Prostate gland (tissue), 2 donors: ENCODE measurements at regions of chr2 and their contacts with region 1.

Region 1: DNA sequence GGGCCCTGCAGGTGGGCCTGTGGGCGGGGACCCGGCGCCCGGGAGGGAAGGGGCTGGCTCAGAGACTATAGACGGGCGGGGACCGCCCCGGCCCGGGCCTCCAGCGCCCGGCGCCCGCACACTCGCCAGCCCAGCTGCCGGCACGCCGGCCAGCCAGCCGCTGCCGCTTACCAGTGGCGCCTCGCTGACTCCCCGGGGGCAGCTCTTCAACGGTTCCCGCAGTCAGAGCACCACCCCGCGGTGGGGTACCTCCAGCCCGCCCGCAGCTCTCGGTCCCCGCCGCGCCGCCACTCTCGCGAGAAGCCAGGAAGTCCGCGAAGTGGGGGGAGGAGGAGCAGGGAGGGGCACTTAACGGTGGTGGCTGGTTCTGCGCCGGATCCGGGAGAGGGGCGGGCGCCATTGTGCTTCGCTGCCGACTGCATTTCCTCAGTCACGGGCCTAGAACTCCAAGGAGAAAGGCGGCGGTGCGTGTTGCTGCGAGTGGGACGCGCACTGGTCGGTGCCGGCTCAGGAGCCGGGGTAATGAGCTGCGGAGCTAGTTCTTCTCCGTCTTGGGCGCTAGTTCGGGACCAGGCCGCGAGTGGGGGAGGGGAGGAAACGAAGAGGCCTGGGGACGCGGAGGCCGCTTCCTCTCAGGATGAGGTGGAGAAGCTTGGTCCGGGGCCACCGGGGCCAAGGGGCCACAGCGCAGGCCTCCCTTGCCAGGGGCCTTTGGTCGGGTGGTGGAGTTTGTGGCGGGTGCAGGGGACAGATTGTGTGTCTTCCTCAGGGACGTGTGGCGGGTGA is at the start of gene MARCHF7:
- DNase-seq: peak; percentile 94
- H3K4me3 ChIP-seq: peak within 1 kb of the TSS; percentile 74 to 93
- H3K27ac ChIP-seq: peak within 1 kb of the TSS; percentile 94 to 97
- H3K4me1 ChIP-seq: peaks cover 12% of the 10 kb centered on the region
- H3K27me3 ChIP-seq: no peaks in the 10 kb centered on the region
- CTCF ChIP-seq: peak in 3 of 4 experiments; percentile 26 to 69 (median 58)
- POLR2A ChIP-seq: peak; percentile 90
- total RNA-seq, gene MARCHF7: 60.7 to 119 TPM

Region 2: GRCh38 chr2:159131914-159132281 is 580.4 kb before region 1 on chr2:
- intact Hi-C with region 1: loop called (anchors 10 kb)
- DNase-seq: no peak
- H3K4me3 ChIP-seq: no peak overlapping the region
- H3K27ac ChIP-seq: no peak overlapping the region
- H3K4me1 ChIP-seq: no peaks in the 10 kb centered on the region
- H3K27me3 ChIP-seq: no peaks in the 10 kb centered on the region
- CTCF ChIP-seq: no peak
- POLR2A ChIP-seq: no peak

Region 3: DNA sequence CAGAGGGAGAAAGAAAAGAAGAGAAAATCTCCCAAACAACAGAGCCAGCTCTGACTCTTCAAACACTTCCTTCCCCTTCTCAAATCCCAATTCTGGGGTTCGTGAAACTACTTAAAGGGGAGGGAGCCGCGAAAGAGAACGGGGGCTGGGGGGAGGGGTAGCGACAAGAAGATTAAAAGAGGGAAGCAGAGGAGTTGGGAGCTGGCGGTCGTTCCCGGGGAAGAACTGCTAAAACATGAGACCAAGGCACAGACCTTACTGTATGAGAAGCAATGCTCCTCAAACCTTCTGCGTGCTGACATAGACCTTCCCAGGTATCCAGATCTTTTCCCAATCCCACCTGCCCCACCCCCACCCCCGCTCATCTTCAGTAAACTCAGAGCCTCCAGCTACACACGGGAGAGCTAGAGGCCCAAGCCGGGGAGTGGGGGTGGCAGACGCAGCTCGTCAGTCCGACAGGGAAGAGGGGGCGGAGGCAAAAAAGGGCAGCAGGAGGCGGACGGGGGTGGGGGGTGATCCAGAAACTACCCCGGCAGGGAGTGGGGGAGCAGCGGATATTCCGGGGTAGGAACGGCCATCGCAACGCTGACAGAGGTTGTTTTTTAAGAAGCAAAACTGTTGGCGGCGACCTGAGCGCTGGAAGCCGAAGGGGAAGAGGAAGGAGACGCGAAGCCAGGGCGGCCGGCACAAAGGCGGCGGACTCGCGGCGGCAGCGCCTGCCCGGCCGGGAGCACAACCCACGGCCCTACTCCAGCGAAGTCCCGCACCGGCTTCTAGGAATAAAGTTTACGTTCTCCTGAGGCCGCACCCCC is 97.0 kb before region 1 on chr2:
- intact Hi-C with region 1: loop called (anchors 5 kb)
- DNase-seq: peak; percentile 94
- H3K4me3 ChIP-seq: peak overlapping the region; percentile 70 to 76
- H3K27ac ChIP-seq: peak overlapping the region; percentile 98 to 99
- H3K4me1 ChIP-seq: no peaks in the 10 kb centered on the region
- H3K27me3 ChIP-seq: no peaks in the 10 kb centered on the region
- CTCF ChIP-seq: no peak
- POLR2A ChIP-seq: peak; percentile 64

Region 4: GRCh38 chr2:159650574-159650973 is 61.8 kb before region 1 on chr2:
- intact Hi-C with region 1: no loop called
- DNase-seq: no peak
- H3K4me3 ChIP-seq: no peak overlapping the region
- H3K27ac ChIP-seq: no peak overlapping the region
- H3K4me1 ChIP-seq: no peaks in the 10 kb centered on the region
- H3K27me3 ChIP-seq: no peaks in the 10 kb centered on the region
- CTCF ChIP-seq: no peak
- POLR2A ChIP-seq: no peak

Region 5: DNA sequence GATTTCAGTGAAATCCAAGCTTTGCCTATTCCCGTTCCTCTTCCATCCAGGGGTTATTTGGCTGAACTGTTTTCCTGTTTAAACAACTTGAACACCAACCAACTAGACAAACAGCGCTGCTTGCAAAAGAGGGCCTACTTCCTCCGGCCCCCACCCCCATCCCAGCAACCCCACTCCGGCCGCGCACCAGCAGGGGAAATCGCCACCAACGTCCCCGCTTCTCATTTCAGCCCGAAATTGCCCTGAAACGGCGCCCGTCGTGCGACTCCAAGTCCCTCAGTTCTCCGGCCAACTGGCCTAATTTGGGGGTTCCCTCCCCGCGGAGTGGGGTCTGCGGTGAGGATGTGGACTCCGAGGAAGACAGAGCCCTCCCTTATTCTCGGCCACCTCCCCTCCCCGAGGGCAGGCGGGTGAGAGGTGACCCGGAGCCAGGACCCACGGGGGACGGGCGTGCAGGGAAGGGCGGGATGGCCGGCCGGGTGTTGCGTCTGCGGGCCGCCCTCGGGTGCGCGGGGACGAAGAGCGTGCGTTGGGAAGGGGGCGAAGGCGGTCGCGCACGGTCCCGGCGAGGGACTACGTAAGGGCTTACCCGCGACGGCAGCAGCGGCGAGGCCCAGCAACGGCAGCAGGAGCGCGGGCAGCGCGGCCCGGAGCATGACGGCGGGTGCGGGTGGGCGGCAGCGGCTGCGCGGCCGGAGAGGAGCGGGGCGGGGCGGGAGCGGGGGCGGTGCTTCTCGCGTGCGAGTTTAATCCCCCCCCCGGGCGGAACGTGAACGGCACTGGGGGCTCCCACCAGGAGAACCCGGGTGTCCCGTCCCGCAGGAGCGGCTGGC is 85.4 kb after region 1 on chr2 and contains the start of gene CD302:
- intact Hi-C with region 1: loop called (anchors 5 kb)
- DNase-seq: peak; percentile 43
- H3K4me3 ChIP-seq: peak within 1 kb of the TSS; percentile 50 to 68
- H3K27ac ChIP-seq: peak within 1 kb of the TSS; percentile 55 to 60
- H3K4me1 ChIP-seq: no peaks in the 10 kb centered on the region
- H3K27me3 ChIP-seq: no peaks in the 10 kb centered on the region
- CTCF ChIP-seq: no peak
- POLR2A ChIP-seq: no peak
- total RNA-seq, gene CD302: 39.3 to 40.4 TPM